ENCODE measurements at regions of chr2 and their contacts with region 1.

Region 1: GRCh38 chr2:206159346-206160124 is at the starts of genes EEF1B2 and NDUFS1:
- DNase-seq: peak; percentile 98 to 99
- ATAC-seq: peak; percentile 99
- H3K4me3 ChIP-seq: peak within 1 kb of the TSS; percentile 72 to 92
- H3K27ac ChIP-seq: peak within 1 kb of the TSS; percentile 57 to 88
- H3K4me1 ChIP-seq: peaks cover 0 to 3% of the 10 kb centered on the region in 2 donors
- H3K27me3 ChIP-seq: no peaks in the 10 kb centered on the region
- total RNA-seq, gene EEF1B2: 367 to 387 TPM
- total RNA-seq, gene NDUFS1: 65.2 to 67.0 TPM

Region 2: GRCh38 chr2:205903638-205904037 is 255.9 kb before region 1 on chr2:
- intact Hi-C with region 1: no loop called
- DNase-seq: no peak
- ATAC-seq: no peak
- H3K4me3 ChIP-seq: no peak overlapping the region
- H3K27ac ChIP-seq: no peak overlapping the region
- H3K4me1 ChIP-seq: no peaks in the 10 kb centered on the region
- H3K27me3 ChIP-seq: peaks cover 0 to 2% of the 10 kb centered on the region in 2 donors

Region 3: GRCh38 chr2:206085742-206086445 is 73.6 kb before region 1 on chr2 and contains the start of gene INO80D:
- intact Hi-C with region 1: loop called (anchors 2 to 5 kb)
- DNase-seq: peak; percentile 84 to 87
- ATAC-seq: peak; percentile 93
- H3K4me3 ChIP-seq: peak within 1 kb of the TSS; percentile 97 to 98
- H3K27ac ChIP-seq: peak within 1 kb of the TSS; percentile 53 to 100
- H3K4me1 ChIP-seq: no peaks in the 10 kb centered on the region
- H3K27me3 ChIP-seq: no peaks in the 10 kb centered on the region
- total RNA-seq, gene INO80D: 28.4 to 33.5 TPM

Region 4: GRCh38 chr2:206442833-206443734 is 283.5 kb after region 1 on chr2 and contains the start of gene ADAM23:
- intact Hi-C with region 1: loop called in 1 of 2 experiments (anchors 5 kb)
- DNase-seq: peak; percentile 58 to 79
- ATAC-seq: peak; percentile 75
- H3K4me3 ChIP-seq: peak within 1 kb of the TSS; percentile 65
- H3K27ac ChIP-seq: no peak within 1 kb of the TSS
- H3K4me1 ChIP-seq: no peaks in the 10 kb centered on the region
- H3K27me3 ChIP-seq: no peaks in the 10 kb centered on the region
- total RNA-seq, gene ADAM23: 4.2 to 11.1 TPM